HepG2 (cell line): ENCODE measurements at regions of chr22 and their contacts with region 1.

Region 1: DNA sequence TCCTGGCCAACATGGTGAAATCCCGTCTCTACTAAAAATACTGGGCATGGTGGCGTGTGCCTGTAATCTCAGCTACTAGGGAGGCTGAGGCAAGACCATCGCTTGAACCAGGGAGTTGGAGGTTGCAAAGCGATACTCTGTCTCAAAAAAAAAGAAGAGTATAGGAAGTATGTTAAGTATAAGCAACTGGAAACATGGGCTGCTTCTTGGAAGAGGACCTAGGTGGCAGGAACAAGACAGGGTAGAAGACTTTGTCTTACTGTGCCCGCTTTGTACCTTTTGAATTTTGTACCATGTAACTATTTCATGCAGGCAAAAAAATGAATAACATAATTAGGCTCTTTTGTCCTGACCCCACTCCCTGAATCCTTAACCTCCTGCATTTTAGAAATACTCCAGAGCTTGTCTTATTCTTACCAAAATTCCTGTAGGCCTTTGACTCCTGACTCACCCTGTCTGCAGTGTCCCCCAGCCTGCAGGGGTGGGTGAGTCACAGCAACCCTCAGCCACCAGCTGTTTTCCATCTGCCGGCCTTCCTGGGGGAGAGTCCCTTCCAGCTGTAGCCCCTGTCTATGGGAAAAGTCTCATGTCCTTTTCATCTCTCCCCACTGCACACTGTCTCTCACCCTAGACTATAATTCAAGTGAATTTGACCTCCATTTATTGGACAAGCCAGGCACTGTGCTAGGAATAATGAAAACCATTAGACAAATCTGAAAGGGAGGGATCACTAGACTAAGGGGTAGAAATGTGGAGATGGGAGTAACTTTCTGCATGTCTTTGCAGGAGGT is 41.8 kb downstream of the TXN2 start:
- DNase-seq: peak; percentile 53
- ATAC-seq: peak; percentile 45
- H3K4me3 ChIP-seq: peak overlapping the region in 1 of 3 experiments; percentile 25; a peak in 2 of 6 replicates
- H3K27ac ChIP-seq: peak overlapping the region; percentile 34
- H3K4me1 ChIP-seq: peaks cover 83% of the 10 kb centered on the region
- H3K27me3 ChIP-seq: no peaks in the 10 kb centered on the region; a peak in 1 of 5 replicates
- CTCF ChIP-seq: no peak
- EP300 ChIP-seq: no peak; a peak in 1 of 4 replicates
- POLR2A ChIP-seq: no peak
- RAD21 ChIP-seq: no peak

Region 2: GRCh38 chr22:36344106-36344827 is 95.4 kb before region 1 on chr22:
- CTCF ChIA-PET with region 1: no interaction called
- POLR2A ChIA-PET with region 1: interaction called, 12 read pairs
- in situ Hi-C with region 1: no loop called
- intact Hi-C with region 1: no loop called
- DNase-seq: no peak
- ATAC-seq: no peak; the same call in 2 of the 3 replicates
- H3K4me3 ChIP-seq: no peak overlapping the region
- H3K27ac ChIP-seq: peak overlapping the region; percentile 85
- H3K4me1 ChIP-seq: peaks cover 85% of the 10 kb centered on the region
- H3K27me3 ChIP-seq: no peaks in the 10 kb centered on the region
- CTCF ChIP-seq: no peak
- EP300 ChIP-seq: no peak
- POLR2A ChIP-seq: no peak
- RAD21 ChIP-seq: no peak

Region 3: GRCh38 chr22:36359181-36359996 is 80.3 kb before region 1 on chr22:
- CTCF ChIA-PET with region 1: no interaction called
- POLR2A ChIA-PET with region 1: interaction called, 11 read pairs
- in situ Hi-C with region 1: no loop called
- intact Hi-C with region 1: loop called (anchors 2 kb)
- DNase-seq: no peak
- ATAC-seq: no peak
- H3K4me3 ChIP-seq: no peak overlapping the region
- H3K27ac ChIP-seq: peak overlapping the region; percentile 50
- H3K4me1 ChIP-seq: peaks cover 100% of the 10 kb centered on the region
- H3K27me3 ChIP-seq: no peaks in the 10 kb centered on the region
- CTCF ChIP-seq: no peak
- EP300 ChIP-seq: no peak
- POLR2A ChIP-seq: no peak
- RAD21 ChIP-seq: no peak

Region 4: GRCh38 chr22:36365020-36365411 is 74.7 kb before region 1 on chr22:
- CTCF ChIA-PET with region 1: no interaction called
- POLR2A ChIA-PET with region 1: interaction called, 11 read pairs
- in situ Hi-C with region 1: no loop called
- intact Hi-C with region 1: loop called (anchors 2 kb)
- DNase-seq: no peak
- ATAC-seq: no peak
- H3K4me3 ChIP-seq: no peak overlapping the region
- H3K27ac ChIP-seq: peak overlapping the region; percentile 76
- H3K4me1 ChIP-seq: peaks cover 100% of the 10 kb centered on the region
- H3K27me3 ChIP-seq: no peaks in the 10 kb centered on the region
- CTCF ChIP-seq: no peak
- EP300 ChIP-seq: peak in 1 of 2 experiments; percentile 22; a peak in 1 of 4 replicates
- POLR2A ChIP-seq: no peak
- RAD21 ChIP-seq: no peak

Region 5: DNA sequence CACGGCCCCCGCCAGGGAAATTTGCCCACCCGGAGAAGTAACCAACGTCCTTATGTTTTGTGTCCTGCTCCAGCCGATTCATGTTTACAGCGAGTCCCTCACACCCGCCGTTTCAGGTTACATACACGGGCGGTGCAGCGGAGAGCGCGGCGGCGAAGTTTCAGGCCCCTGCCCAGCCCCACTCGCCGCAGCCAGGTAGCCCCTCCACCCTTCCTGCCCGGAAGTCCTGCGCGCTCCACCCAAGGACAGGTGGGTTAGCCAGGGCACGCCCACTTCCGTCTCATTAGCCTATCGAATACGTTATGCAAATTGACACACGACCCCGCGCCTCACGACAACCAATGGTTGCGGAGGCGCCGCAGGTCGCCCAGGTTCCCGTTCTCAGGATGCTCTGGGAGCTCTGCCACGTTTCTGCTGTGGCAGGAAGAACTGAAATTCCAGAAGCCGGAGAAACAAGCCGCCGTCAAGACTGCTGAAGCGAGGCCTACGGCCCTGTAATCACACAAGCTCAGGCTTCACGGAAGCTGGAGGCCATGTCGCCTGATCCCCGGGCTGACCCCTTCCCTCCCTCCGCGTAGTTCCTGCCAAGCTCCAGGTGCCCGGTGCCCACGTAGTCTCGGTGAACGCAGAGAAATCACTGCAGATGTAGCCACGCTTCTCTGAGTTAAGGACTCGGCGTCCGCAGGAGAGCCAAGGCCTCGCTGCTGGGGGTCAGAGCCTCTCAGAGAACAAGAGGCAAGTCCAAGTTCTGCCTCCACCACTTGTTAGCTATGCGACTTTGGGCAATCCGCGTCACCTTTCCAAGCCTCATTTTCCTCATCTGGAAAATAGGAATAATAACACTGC is 29.5 kb before region 1 on chr22:
- CTCF ChIA-PET with region 1: no interaction called
- POLR2A ChIA-PET with region 1: interaction called, 36 read pairs
- in situ Hi-C with region 1: no loop called
- intact Hi-C with region 1: no loop called
- DNase-seq: peak; percentile 97
- ATAC-seq: peak; percentile 94
- H3K4me3 ChIP-seq: peak overlapping the region; percentile 56 to 72 (median 56)
- H3K27ac ChIP-seq: peak overlapping the region; percentile 90
- H3K4me1 ChIP-seq: peaks cover 74% of the 10 kb centered on the region
- H3K27me3 ChIP-seq: no peaks in the 10 kb centered on the region
- CTCF ChIP-seq: no peak
- EP300 ChIP-seq: no peak
- POLR2A ChIP-seq: peak; percentile 83 to 87
- RAD21 ChIP-seq: no peak

Region 6: DNA sequence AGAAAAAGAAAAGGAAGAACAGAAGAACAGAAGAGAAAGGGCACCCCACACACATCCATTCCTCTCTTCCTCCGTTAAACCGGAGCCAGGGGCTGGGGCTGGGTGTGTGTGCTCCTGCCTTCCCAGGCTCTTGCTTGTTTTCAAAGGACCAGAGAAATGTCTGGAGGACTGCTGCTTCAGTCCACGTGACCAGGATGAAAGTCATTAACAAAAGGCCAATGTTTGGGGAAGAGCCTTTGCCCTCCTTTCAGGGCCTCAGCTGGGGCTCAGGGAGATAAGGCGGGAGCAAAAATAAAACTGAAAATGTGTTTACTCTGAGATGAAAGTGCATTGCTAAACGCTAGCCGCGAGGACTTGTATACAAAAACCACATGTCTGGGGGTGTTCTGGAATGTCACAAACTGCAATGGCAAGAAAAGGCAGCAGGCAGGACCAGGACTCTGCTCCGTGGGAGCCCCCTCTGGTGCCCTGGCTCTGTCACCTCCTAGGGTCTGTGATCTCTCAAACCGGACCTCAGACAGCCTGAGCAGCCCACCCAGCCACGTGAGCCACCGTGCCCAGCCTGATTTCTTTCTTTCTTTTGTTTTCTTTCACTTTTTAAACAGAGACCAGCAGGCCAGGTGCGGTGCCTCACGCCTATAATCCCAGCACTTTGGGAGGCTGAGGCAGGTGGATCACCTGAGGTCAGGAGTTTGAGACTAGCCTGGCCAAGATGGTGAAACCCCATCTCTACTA is 20.3 kb before region 1 on chr22:
- CTCF ChIA-PET with region 1: no interaction called
- POLR2A ChIA-PET with region 1: interaction called, 151 read pairs
- in situ Hi-C with region 1: no loop called
- intact Hi-C with region 1: no loop called
- DNase-seq: peak; percentile 100
- ATAC-seq: peak; percentile 88
- H3K4me3 ChIP-seq: peak overlapping the region in 2 of 3 experiments; percentile 49 to 53; a peak in 5 of 6 replicates
- H3K27ac ChIP-seq: peak overlapping the region; percentile 88
- H3K4me1 ChIP-seq: peaks cover 83% of the 10 kb centered on the region
- H3K27me3 ChIP-seq: no peaks in the 10 kb centered on the region
- CTCF ChIP-seq: peak; percentile 34
- EP300 ChIP-seq: peak; percentile 44 to 99; a peak in 3 of 4 replicates
- POLR2A ChIP-seq: peak; percentile 48 to 57; a peak in 3 of 4 replicates
- RAD21 ChIP-seq: peak; percentile 49

Region 7: GRCh38 chr22:36425977-36426523 is 13.6 kb before region 1 on chr22:
- CTCF ChIA-PET with region 1: no interaction called
- POLR2A ChIA-PET with region 1: interaction called, 151 read pairs
- in situ Hi-C with region 1: no loop called
- intact Hi-C with region 1: no loop called
- DNase-seq: peak; percentile 74
- ATAC-seq: peak; percentile 93
- H3K4me3 ChIP-seq: no peak overlapping the region
- H3K27ac ChIP-seq: peak overlapping the region; percentile 71
- H3K4me1 ChIP-seq: peaks cover 69% of the 10 kb centered on the region
- H3K27me3 ChIP-seq: no peaks in the 10 kb centered on the region
- CTCF ChIP-seq: peak; percentile 53
- EP300 ChIP-seq: no peak; a peak in 1 of 4 replicates
- POLR2A ChIP-seq: peak in 1 of 2 experiments; percentile 34; a peak in 1 of 4 replicates
- RAD21 ChIP-seq: no peak